Activated B cell treated with CpG ODN at 0.5 μM for 24 hours (primary cell): ENCODE measurements at regions of chr1 and their contacts with region 1.

Region 1: DNA sequence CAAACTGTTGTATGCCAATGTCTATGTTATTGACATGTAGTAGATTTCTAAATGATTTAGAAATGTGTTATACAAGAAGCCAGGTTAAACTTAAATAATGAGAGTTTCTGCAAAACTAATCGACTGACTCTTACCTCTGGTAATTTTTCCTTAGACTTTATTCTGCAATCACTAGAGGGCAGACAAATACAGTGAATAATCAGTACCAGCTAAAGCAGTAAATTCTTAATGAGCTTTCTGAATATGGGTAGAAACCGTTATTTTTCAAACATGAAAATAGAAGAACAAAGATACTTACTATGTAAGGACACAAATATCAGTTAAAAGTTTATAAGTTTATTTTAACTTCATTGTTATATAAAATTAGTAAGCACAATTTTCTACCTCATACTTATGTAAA is 97.9 kb upstream of the RGS1 start:
- DNase-seq: no peak
- ATAC-seq: peak; percentile 75
- H3K4me3 Mint-ChIP-seq: no peak overlapping the region
- H3K27ac Mint-ChIP-seq: no peak overlapping the region
- H3K4me1 Mint-ChIP-seq: no peaks in the 10 kb centered on the region
- H3K27me3 Mint-ChIP-seq: peaks cover 7% of the 10 kb centered on the region
- CTCF ChIP-seq: peak; percentile 26

Region 2: DNA sequence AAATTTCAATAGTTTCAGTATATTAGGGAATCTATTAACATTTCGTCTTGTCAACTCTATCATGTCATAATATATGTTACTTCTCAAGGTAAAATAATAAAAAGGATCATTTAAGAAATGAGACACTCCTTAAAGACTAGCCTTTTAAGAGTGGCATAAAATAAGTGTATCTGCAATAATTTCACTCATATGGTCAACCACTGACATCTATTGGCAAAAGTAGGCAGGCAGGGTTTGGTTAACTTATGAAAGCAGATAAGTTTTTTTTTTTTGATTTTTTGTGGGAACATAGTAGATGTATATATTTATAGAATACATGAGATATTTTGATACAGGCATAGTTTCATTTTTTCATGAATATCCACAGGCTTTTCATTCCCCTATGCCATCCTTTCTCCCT is 166.3 kb before region 1 on chr1:
- CTCF ChIA-PET with region 1: no interaction called
- POLR2A ChIA-PET with region 1: no interaction called
- intact Hi-C with region 1: no loop called
- DNase-seq: no peak
- ATAC-seq: no peak
- H3K4me3 Mint-ChIP-seq: no peak overlapping the region
- H3K27ac Mint-ChIP-seq: no peak overlapping the region
- H3K4me1 Mint-ChIP-seq: no peaks in the 10 kb centered on the region
- H3K27me3 Mint-ChIP-seq: no peaks in the 10 kb centered on the region
- CTCF ChIP-seq: no peak

Region 3: DNA sequence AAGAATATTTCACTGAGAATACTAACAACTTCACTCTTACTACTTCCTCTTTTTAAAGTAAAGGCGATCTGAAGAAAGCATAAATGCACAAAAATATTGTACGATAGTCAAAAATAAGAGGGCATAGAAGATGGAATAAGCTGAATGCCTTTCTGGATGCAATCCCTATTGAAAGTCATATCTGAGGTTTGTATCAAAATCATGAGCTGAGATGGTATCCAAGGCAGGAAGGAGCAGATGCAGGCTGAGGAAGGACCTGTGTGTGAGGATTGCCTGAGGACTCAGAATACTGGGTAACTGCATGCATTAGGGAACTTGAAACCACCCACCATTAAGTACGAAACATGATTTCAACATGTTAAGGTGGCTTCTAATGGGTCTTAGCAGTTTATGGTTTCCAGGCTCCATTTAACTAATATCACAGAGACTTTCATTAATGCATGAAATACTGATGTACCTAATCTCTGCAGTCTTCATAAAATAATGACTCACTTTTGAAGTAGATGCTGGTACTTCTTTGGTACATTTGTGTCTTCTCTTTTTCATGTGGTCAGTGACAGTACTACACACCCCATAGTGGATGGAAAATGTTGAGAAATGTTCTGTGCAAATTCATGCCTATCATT is 68.4 kb after region 1 on chr1:
- CTCF ChIA-PET with region 1: interaction called, 8 read pairs
- POLR2A ChIA-PET with region 1: no interaction called
- intact Hi-C with region 1: loop called (anchors 2 kb)
- DNase-seq: no peak
- ATAC-seq: peak; percentile 66
- H3K4me3 Mint-ChIP-seq: peak overlapping the region; percentile 65
- H3K27ac Mint-ChIP-seq: peak overlapping the region; percentile 84
- H3K4me1 Mint-ChIP-seq: peaks cover 60% of the 10 kb centered on the region
- H3K27me3 Mint-ChIP-seq: no peaks in the 10 kb centered on the region
- CTCF ChIP-seq: no peak

Region 4: GRCh38 chr1:193019442-193020026 is 541.9 kb after region 1 on chr1:
- CTCF ChIA-PET with region 1: interaction called, 56 read pairs
- POLR2A ChIA-PET with region 1: interaction called, 3 read pairs
- intact Hi-C with region 1: loop called (anchors 1 kb)
- DNase-seq: no peak
- ATAC-seq: no peak
- H3K4me3 Mint-ChIP-seq: no peak overlapping the region
- H3K27ac Mint-ChIP-seq: no peak overlapping the region
- H3K4me1 Mint-ChIP-seq: no peaks in the 10 kb centered on the region
- H3K27me3 Mint-ChIP-seq: no peaks in the 10 kb centered on the region
- CTCF ChIP-seq: no peak

Region 5: DNA sequence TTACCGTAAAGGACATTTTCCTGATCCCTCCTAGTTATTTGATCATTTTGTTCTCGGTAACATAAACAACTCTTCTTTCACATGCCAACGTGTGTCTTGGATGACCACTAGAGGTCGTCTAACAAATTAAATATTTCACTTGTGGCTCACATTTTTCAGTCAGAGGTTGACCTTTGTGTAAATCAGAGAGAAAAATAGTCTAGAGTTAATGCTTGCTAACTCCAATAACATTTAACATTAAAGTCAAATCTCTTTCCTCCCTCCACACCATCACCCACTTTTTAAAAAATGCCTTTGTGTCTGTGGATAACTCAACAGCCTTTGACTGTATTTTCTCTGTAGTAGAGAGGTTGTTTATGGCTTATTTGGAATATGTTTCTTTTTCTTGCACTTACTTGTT is 929.3 kb after region 1 on chr1:
- CTCF ChIA-PET with region 1: no interaction called
- POLR2A ChIA-PET with region 1: no interaction called
- intact Hi-C with region 1: loop called (anchors 10 kb)
- DNase-seq: no peak
- ATAC-seq: no peak
- H3K4me3 Mint-ChIP-seq: no peak overlapping the region
- H3K27ac Mint-ChIP-seq: no peak overlapping the region
- H3K4me1 Mint-ChIP-seq: peaks cover 4% of the 10 kb centered on the region
- H3K27me3 Mint-ChIP-seq: no peaks in the 10 kb centered on the region
- CTCF ChIP-seq: peak; percentile 57

Region 6: DNA sequence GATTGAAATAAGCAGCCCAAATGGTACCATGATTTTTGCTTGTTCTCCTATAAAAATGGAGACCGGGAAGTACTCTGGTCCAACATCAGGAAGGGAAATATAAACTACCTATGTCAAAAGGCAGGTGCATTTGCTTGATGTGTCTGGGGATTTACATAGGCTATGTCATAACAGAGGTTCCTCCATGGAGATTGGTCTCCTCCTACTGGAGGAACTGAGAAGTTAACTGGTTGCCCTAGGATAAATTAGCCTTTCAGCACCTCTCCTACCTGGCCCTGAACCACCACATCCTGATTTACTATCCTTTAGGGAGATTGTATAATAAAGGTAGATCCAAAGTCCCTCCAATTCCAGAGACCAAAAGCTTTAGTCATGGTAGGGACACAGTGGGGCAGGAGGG is 1818.1 kb after region 1 on chr1:
- CTCF ChIA-PET with region 1: no interaction called
- POLR2A ChIA-PET with region 1: no interaction called
- intact Hi-C with region 1: loop called (anchors 5 kb)
- DNase-seq: no peak
- ATAC-seq: peak; percentile 98
- H3K4me3 Mint-ChIP-seq: no peak overlapping the region
- H3K27ac Mint-ChIP-seq: no peak overlapping the region
- H3K4me1 Mint-ChIP-seq: peaks cover 5% of the 10 kb centered on the region
- H3K27me3 Mint-ChIP-seq: peaks cover 3% of the 10 kb centered on the region
- CTCF ChIP-seq: peak; percentile 28